ENCODE measurements at regions of chr12 and their contacts with region 1.

Region 1: GRCh38 chr12:9910716-9911421 is 21.3 kb downstream of the CLEC2A start:
- DNase-seq: no peak
- ATAC-seq: no peak
- H3K4me3 ChIP-seq: no peak overlapping the region
- H3K27ac ChIP-seq: no peak overlapping the region
- H3K4me1 ChIP-seq: no peaks in the 10 kb centered on the region
- H3K27me3 ChIP-seq: no peaks in the 10 kb centered on the region
- CTCF ChIP-seq: no peak

Region 2: GRCh38 chr12:9404469-9405260 is 506.2 kb before region 1 on chr12:
- intact Hi-C with region 1: no loop called
- DNase-seq: no peak
- ATAC-seq: peak; percentile 45
- H3K4me3 ChIP-seq: no peak overlapping the region
- H3K27ac ChIP-seq: no peak overlapping the region
- H3K4me1 ChIP-seq: no peaks in the 10 kb centered on the region
- H3K27me3 ChIP-seq: no peaks in the 10 kb centered on the region
- CTCF ChIP-seq: no peak

Region 3: GRCh38 chr12:9813821-9814809 is 96.8 kb before region 1 on chr12:
- intact Hi-C with region 1: loop called (anchors 10 kb)
- DNase-seq: peak; percentile 91
- ATAC-seq: peak; percentile 99
- H3K4me3 ChIP-seq: peak overlapping the region; percentile 39
- H3K27ac ChIP-seq: no peak overlapping the region
- H3K4me1 ChIP-seq: peaks cover 5% of the 10 kb centered on the region
- H3K27me3 ChIP-seq: no peaks in the 10 kb centered on the region
- CTCF ChIP-seq: peak; percentile 93